ENCODE measurements at regions of chr6 and their contacts with region 1.

Region 1: GRCh38 chr6:140160494-140160893 is 786.0 kb upstream of the CITED2 start:
- DNase-seq: no peak
- ATAC-seq: no peak
- H3K4me3 ChIP-seq: no peak overlapping the region
- H3K27ac ChIP-seq: no peak overlapping the region
- H3K4me1 ChIP-seq: no peaks in the 10 kb centered on the region
- H3K27me3 ChIP-seq: no peaks in the 10 kb centered on the region
- CTCF ChIP-seq: no peak
- EP300 ChIP-seq: no peak
- POLR2A ChIP-seq: no peak
- RAD21 ChIP-seq: no peak

Region 2: DNA sequence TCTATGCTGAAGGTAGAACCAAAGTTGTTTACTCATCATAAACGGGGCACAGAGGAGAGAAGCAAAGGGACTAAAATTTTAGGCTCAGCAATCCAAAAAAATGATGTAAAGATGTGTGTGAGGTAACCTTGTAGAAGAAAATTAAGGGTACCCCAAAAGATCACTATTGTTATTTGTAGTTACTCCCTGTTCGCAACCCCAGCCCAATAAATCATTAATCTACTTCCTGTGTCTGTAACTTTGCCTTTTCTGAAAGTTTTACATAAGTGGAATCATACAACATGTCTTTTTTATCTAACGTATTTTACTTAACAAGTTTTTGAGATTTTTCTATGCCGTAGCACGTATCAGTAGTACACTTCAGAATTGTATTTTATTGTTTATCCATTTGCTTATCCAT is 857.4 kb after region 1 on chr6:
- CTCF ChIA-PET with region 1: no interaction called
- POLR2A ChIA-PET with region 1: interaction called, 11 read pairs
- RAD21 ChIA-PET with region 1: no interaction called
- SMC1A ChIA-PET with region 1: no interaction called
- in situ Hi-C with region 1: no loop called
- intact Hi-C with region 1: no loop called
- DNase-seq: no peak
- ATAC-seq: no peak
- H3K4me3 ChIP-seq: no peak overlapping the region
- H3K27ac ChIP-seq: no peak overlapping the region
- H3K4me1 ChIP-seq: no peaks in the 10 kb centered on the region
- H3K27me3 ChIP-seq: no peaks in the 10 kb centered on the region
- CTCF ChIP-seq: no peak
- EP300 ChIP-seq: no peak
- POLR2A ChIP-seq: no peak
- RAD21 ChIP-seq: no peak

Measured in GM12878 (cell line).